ENCODE measurements at regions of chr15 and their contacts with region 1.

Region 1: GRCh38 chr15:65006876-65007275 is 17.2 kb upstream of the SPG21 start:
- H3K4me3 ChIP-seq: no peak overlapping the region
- H3K27ac ChIP-seq: no peak overlapping the region
- H3K4me1 ChIP-seq: no peaks in the 10 kb centered on the region
- CTCF ChIP-seq: no peak

Region 2: DNA sequence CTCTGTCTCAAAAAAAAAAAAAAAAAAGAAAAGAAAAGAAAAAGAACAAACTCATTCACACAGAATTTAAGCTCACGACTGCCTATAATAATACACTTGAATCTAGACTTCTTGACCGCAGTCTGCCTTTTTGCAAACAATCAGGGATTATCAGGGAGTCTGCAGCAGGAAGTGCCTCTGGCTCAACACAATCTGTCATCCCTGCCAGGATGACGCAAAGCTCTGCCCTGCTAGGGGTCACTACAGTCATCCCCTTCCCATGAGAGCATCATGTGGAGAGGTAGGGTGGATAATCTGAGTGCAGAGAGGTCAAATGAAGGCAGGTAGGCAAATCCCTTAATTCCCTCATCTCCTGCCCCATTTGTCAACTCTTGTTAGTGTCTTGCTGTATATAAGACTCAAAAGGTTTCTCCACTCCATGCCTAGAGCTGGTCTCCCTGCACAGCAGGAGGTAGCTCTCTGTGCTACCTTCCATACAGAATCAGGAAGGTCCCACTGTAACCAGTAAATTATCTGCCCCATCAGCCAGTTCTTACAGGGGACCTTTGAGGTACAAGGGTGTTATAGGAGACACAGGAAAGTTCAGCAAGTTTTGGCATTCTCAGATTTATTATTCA is 103.9 kb after region 1 on chr15:
- CTCF ChIA-PET with region 1: no interaction called
- POLR2A ChIA-PET with region 1: interaction called, 10 read pairs
- H3K4me3 ChIP-seq: no peak overlapping the region
- H3K27ac ChIP-seq: no peak overlapping the region
- H3K4me1 ChIP-seq: 0 out of 2 replicates have a peak, but pooled peaks cover 2% of the 10 kb centered on the region
- CTCF ChIP-seq: no peak